WTC11 (cell line): ENCODE measurements at regions of chr17 and their contacts with region 1.

Region 1: DNA sequence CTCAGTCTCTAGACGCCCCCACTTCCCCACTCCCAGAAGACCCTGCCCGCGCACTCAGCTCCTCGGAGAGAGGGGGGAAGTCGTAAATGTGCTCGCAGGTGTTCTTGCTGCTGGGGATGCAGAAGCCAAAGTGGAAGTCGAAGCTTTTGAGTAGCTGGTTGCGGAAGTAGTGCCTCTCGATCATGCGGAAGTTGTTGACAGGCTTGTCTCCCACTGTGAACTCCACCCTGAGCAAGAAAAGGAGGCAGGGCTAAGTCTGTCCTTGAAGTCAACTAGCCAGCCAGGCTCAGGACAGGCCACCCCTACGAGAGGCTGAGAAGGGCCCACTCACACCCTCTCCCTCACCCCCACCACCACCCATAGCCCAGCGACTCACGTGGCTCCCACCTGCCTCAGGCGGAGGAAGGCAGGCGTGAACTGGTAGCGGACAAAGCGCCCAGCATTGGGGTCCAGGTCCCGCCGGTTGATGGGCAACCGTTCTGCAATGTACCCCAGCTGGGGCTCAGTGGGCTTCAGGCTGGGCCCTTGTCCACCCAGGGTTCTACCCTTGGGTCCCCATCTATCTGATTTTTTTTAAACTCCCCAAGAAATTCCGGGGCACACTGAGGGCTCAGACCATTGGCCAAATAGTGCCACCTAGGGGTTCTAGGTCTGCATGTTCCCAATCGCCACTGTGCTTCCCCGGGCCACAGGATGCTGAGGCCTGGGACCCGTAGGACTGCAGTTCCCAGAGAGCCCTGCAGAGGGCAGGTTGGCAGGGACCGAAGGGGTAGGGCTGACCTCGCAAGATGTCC is 4.6 kb downstream of the UNC119 start:
- DNase-seq: peak; percentile 93
- ATAC-seq: peak; percentile 70
- H3K4me3 Mint-ChIP-seq: no peak overlapping the region
- H3K27ac Mint-ChIP-seq: no peak overlapping the region
- H3K4me1 Mint-ChIP-seq: peaks cover 34% of the 10 kb centered on the region
- H3K27me3 Mint-ChIP-seq: no peaks in the 10 kb centered on the region
- CTCF ChIP-seq: peak; percentile 92

Region 2: DNA sequence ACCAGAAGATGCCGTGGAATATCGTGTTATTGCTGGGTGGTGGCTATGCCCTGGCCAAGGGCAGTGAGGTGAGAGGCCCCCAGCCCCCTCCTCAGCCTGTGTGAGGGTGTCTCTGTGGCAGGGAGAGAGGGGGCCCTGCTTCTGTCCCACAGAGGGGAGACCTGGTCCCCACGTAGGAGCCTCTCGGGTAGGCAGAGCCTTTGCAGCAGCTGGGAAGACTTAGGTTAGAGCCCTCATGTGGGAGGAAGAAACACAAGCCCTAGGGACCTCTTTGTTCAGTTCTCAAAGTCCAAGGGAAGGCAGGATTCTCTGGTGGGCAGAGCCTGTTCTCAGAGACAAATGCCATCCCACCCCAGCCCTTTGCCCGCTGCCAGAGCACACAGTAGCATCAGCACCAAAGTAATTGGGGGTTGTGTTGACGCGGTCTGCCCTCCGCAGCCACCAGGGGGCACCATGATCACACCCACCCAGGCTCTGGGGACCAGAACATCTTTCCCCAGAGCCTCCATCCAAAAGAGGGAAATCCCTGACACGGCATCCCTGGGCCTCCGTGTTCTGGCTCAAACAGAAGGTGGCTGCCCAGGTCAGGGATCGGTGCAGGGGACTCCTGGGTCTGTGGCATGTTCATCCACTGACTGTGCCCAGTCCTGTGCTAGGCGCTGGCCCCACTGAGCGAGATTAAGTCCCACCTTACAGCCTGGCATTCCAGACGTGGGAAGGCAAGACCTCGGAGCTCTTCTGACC is 53.2 kb before region 1 on chr17:
- CTCF ChIA-PET with region 1: interaction called, 11 read pairs
- POLR2A ChIA-PET with region 1: no interaction called
- DNase-seq: peak; percentile 89
- ATAC-seq: peak; percentile 74
- H3K4me3 Mint-ChIP-seq: no peak overlapping the region
- H3K27ac Mint-ChIP-seq: no peak overlapping the region
- H3K4me1 Mint-ChIP-seq: peaks cover 12% of the 10 kb centered on the region
- H3K27me3 Mint-ChIP-seq: peaks cover 5% of the 10 kb centered on the region
- CTCF ChIP-seq: peak; percentile 88

Region 3: GRCh38 chr17:28514571-28515002 is 33.2 kb before region 1 on chr17:
- CTCF ChIA-PET with region 1: no interaction called
- POLR2A ChIA-PET with region 1: no interaction called
- DNase-seq: no peak
- ATAC-seq: no peak
- H3K4me3 Mint-ChIP-seq: no peak overlapping the region
- H3K27ac Mint-ChIP-seq: no peak overlapping the region
- H3K4me1 Mint-ChIP-seq: no peaks in the 10 kb centered on the region
- H3K27me3 Mint-ChIP-seq: peaks cover 7% of the 10 kb centered on the region
- CTCF ChIP-seq: no peak

Region 4: GRCh38 chr17:28571255-28572122 is 23.7 kb after region 1 on chr17 and contains the start of gene PIGS:
- CTCF ChIA-PET with region 1: interaction called, 26 read pairs
- POLR2A ChIA-PET with region 1: interaction called, 8 read pairs
- DNase-seq: peak; percentile 98
- ATAC-seq: peak; percentile 98
- H3K4me3 Mint-ChIP-seq: peak within 1 kb of the TSS; percentile 91
- H3K27ac Mint-ChIP-seq: peak within 1 kb of the TSS; percentile 87
- H3K4me1 Mint-ChIP-seq: peaks cover 20% of the 10 kb centered on the region
- H3K27me3 Mint-ChIP-seq: peaks cover 3% of the 10 kb centered on the region; the same call in 1 of the 2 replicates
- CTCF ChIP-seq: no peak
- total RNA-seq, gene PIGS: 50.6 to 55.0 TPM (median 54.6 TPM) in 3 replicates

Region 5: DNA sequence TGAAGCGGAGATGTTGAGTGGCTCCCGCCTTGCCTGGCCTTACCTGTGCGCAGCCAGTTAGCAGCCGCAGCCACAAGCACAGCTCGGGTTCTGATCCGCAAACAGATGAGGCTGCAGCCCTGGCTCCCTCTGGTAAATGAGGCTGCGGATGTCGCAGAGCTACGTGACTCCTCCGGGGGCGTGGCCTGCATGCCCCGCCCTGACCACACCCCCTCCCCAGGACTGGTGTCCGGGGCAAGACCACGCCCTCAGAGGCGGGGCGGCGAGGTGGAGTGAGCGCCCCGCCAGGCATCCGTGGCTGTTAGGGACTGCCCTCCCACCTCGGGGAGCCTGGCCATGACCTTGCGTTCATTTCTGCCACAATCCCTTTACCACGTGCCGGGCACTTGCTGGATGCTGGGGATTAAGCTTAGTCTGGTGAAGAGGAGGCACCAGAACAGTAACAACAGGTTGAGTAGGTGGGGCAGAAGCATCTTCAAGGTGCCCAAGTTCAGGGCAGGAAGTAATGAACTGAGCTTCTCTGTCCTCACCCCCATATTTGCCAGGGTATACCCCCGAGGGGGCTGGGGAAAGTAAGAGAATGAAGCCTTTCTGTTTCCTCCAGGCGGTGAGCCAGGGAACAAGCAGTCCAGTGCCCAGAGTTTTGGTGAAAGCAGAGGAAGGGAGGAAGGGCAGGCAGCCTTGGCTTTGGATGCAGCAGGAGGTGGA is 29.1 kb after region 1 on chr17 and contains the start of gene ALDOC:
- CTCF ChIA-PET with region 1: interaction called, 26 read pairs
- POLR2A ChIA-PET with region 1: interaction called, 8 read pairs
- DNase-seq: peak; percentile 99
- ATAC-seq: peak; percentile 90
- H3K4me3 Mint-ChIP-seq: peak within 1 kb of the TSS; percentile 75
- H3K27ac Mint-ChIP-seq: peak within 1 kb of the TSS; percentile 97
- H3K4me1 Mint-ChIP-seq: peaks cover 16% of the 10 kb centered on the region
- H3K27me3 Mint-ChIP-seq: peaks cover 3% of the 10 kb centered on the region; the same call in 1 of the 2 replicates
- CTCF ChIP-seq: no peak
- total RNA-seq, gene ALDOC: 73.5 to 95.7 TPM (median 94.2 TPM) in 3 replicates